Activated CD4-positive, alpha-beta memory T cell treated with anti-CD3 and anti-CD28 coated beads for 36 hours (primary cell): ENCODE measurements at regions of chr2 and their contacts with region 1.

Region 1: DNA sequence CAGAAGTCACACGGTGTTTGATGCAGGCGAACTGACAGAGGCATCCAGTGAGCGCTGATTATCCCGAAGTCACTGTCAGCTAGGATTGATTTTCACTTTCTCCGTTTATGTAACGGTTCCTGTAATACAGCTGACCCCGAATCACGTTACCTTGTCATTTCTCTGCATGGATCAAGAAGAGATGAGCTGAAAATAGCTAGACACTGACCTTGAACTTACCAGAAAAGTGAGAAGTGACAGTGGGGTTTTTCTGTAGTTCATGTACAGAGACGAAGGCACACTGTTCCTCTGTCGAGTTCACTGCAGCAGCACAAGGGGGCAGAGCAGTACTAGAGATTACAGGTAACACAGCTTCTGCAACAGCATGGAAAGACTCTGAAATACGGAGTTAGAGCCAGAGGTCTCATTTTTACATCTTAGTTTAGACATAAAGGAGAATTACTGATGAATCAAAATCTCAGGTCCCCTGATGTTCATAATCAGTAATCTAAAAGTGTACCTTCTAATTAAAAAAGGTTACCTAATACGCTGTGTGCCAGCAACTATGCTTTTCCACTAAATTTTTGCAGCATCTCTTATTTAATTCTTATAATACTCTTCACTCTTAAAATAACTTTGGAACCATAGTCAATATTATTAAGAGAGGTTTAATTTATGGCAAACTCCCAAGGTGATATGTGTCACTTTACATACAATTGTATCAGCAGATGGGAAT is 33.1 kb downstream of the ARHGAP15 start:
- DNase-seq: peak; percentile 68
- H3K4me3 Mint-ChIP-seq: no peak overlapping the region
- H3K27ac Mint-ChIP-seq: peak overlapping the region; percentile 14
- H3K4me1 Mint-ChIP-seq: peaks cover 77% of the 10 kb centered on the region
- H3K27me3 Mint-ChIP-seq: no peaks in the 10 kb centered on the region

Region 2: DNA sequence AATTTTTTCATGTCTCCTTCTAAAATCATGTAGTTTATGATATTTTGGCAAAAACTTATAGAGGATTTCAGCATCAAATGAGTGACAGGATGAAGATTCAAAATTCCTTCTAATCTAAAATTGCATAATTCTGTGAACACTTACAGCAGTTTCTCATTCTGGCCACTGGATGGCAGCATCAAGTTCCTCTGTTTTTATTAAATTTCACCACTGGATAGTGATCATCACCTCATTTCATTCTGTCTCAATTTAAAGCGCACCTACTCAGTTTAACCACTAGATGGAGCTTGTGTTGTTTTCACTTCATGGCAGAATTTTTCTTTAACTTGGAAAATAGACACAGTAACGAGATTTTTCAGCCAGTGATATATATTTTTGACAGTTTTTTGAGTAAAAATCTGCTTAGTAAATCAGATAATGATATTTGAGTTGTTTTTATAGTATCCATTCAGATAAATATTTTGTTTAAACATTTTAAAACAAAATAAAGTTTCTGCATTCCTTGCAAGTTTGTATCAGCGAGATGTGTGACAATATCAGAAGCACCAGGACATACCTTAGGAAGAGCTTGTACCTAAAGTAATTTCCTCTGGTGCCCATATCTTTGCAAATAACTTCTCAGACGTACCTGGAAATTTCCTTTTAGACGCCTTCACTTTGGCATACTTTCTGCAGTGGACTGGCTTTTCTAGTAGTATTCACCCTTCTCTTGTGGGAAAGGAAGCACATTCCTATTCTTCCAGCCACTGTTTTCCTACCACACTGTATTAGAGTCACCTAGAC is 127.8 kb before region 1 on chr2:
- CTCF ChIA-PET with region 1: interaction called, 20 read pairs
- POLR2A ChIA-PET with region 1: no interaction called
- intact Hi-C with region 1: no loop called
- DNase-seq: peak; percentile 64
- H3K4me3 Mint-ChIP-seq: no peak overlapping the region
- H3K27ac Mint-ChIP-seq: no peak overlapping the region
- H3K4me1 Mint-ChIP-seq: peaks cover 8% of the 10 kb centered on the region
- H3K27me3 Mint-ChIP-seq: no peaks in the 10 kb centered on the region

Region 3: DNA sequence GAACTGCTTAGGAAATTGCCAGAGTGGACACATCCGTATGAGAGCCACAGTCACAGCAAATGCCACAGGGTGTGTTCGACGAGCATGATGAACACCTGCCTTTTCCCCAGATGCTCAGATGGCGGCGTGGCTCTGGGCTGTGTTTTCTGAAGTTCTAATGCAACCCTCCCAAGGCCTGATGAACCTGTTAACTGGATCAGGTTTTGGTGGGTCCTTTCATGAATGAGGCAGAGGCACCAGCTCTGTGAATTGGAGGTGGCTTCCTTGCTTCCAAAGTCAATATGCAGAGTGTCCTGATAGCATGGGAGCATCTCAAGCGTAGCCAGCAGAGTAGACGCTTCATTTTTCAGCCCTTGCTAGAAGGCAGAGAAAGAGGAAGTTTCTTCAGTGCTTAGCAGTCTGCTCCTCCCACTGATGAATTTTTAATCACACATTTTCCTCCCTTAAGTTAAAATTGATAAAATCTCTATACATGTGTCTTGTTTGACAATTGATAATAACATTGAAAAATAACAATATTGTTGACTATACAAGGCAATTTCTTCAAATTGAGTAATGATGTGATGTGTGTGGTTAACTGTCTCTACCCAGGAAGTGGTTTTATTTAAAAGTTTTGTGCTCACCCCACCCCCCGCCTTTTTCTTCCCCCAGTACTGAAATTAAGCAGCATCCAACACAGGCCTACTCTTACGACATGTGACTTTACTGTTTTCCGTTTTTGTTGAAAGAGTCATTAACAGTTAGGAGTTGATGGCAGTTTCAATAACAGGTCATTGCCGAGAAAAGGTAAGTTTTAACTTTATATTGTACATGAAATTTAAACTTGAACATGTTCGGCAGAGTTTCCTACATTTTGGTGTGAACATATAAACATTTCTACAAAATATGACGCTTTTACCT is 33.3 kb before region 1 on chr2 and contains the start of gene ARHGAP15:
- CTCF ChIA-PET with region 1: interaction called, 28 read pairs
- POLR2A ChIA-PET with region 1: no interaction called
- intact Hi-C with region 1: no loop called
- DNase-seq: peak; percentile 85
- H3K4me3 Mint-ChIP-seq: peak within 1 kb of the TSS; percentile 83
- H3K27ac Mint-ChIP-seq: peak within 1 kb of the TSS; percentile 100
- H3K4me1 Mint-ChIP-seq: peaks cover 29% of the 10 kb centered on the region
- H3K27me3 Mint-ChIP-seq: no peaks in the 10 kb centered on the region
- total RNA-seq, gene ARHGAP15: 70.2 to 71.2 TPM

Region 4: DNA sequence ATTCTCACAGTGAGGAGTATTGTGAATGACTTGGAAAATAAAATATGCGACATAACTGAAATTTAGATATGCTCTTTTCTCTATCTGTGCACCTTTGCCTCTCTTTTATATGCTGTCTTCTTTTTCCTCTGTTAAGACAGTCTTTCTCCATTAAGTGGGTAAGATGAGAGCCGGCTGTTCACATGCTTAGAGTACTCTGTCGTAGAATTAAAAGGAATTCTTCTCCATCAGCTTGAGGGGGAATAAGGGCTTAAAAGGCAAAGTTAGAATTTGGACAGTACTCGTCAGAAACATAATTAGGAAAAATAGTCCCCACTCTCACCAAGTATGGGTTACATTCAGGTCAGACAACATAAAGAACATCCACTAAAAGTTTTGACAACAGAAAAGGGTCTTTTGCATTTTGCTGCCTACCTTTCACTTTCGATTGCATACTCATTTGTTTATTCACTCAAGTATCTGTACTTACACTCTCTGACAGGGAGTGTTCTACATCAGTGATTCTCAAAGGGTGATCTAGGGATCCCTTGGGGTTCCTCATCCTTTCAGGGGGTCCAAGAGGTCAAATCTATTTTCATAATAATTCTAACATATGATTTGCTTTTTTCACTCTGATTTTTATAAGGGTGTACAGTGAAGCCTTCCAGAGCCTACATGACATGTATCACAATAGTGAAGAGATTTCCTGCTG is 15.0 kb after region 1 on chr2:
- CTCF ChIA-PET with region 1: interaction called, 9 read pairs
- POLR2A ChIA-PET with region 1: no interaction called
- intact Hi-C with region 1: loop called (anchors 2 kb)
- DNase-seq: no peak
- H3K4me3 Mint-ChIP-seq: peak overlapping the region; percentile 70
- H3K27ac Mint-ChIP-seq: peak overlapping the region; percentile 82
- H3K4me1 Mint-ChIP-seq: peaks cover 53% of the 10 kb centered on the region
- H3K27me3 Mint-ChIP-seq: no peaks in the 10 kb centered on the region

Region 5: GRCh38 chr2:143217512-143218115 is 55.3 kb after region 1 on chr2:
- CTCF ChIA-PET with region 1: interaction called, 43 read pairs
- POLR2A ChIA-PET with region 1: interaction called, 3 read pairs
- intact Hi-C with region 1: loop called (anchors 1 kb)
- DNase-seq: no peak
- H3K4me3 Mint-ChIP-seq: no peak overlapping the region
- H3K27ac Mint-ChIP-seq: peak overlapping the region; percentile 38
- H3K4me1 Mint-ChIP-seq: peaks cover 38% of the 10 kb centered on the region
- H3K27me3 Mint-ChIP-seq: no peaks in the 10 kb centered on the region

Region 6: GRCh38 chr2:143321994-143322393 is 159.7 kb after region 1 on chr2:
- CTCF ChIA-PET with region 1: no interaction called
- POLR2A ChIA-PET with region 1: no interaction called
- intact Hi-C with region 1: no loop called
- DNase-seq: no peak
- H3K4me3 Mint-ChIP-seq: no peak overlapping the region
- H3K27ac Mint-ChIP-seq: no peak overlapping the region
- H3K4me1 Mint-ChIP-seq: peaks cover 65% of the 10 kb centered on the region
- H3K27me3 Mint-ChIP-seq: no peaks in the 10 kb centered on the region

Region 7: DNA sequence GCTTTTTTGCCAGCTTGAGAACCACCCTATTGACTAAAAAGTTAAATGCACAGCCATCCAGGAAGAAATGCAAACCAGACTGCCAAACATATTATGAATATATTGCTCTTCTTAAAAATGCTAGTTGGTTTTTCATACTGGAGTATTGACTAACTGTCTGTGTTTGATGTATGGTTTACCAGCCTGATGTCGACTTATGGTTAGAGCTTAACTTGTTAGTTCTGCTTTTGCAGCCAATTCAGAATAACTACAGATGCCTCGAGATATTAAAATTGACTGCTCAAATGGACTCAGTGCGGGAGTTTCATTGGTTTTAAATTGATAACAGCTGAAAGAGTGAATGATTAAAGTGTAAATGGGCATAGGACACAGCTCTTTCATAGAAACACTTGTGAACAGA is 336.8 kb after region 1 on chr2:
- CTCF ChIA-PET with region 1: no interaction called
- POLR2A ChIA-PET with region 1: no interaction called
- intact Hi-C with region 1: no loop called
- DNase-seq: no peak
- H3K4me3 Mint-ChIP-seq: no peak overlapping the region
- H3K27ac Mint-ChIP-seq: no peak overlapping the region
- H3K4me1 Mint-ChIP-seq: peaks cover 39% of the 10 kb centered on the region
- H3K27me3 Mint-ChIP-seq: no peaks in the 10 kb centered on the region